ENCODE measurements at regions of chr1 and their contacts with region 1.

Region 1: GRCh38 chr1:31548907-31549808 is 27.2 kb upstream of the TINAGL1 start:
- DNase-seq: peak; percentile 93
- ATAC-seq: peak; percentile 95
- H3K4me3 Mint-ChIP-seq: peak overlapping the region; percentile 63
- H3K27ac Mint-ChIP-seq: no peak overlapping the region
- H3K4me1 Mint-ChIP-seq: peaks cover 11% of the 10 kb centered on the region
- H3K27me3 Mint-ChIP-seq: peaks cover 7% of the 10 kb centered on the region

Region 2: GRCh38 chr1:31182352-31182751 is 366.8 kb before region 1 on chr1:
- CTCF ChIA-PET with region 1: interaction called, 12 read pairs
- POLR2A ChIA-PET with region 1: no interaction called
- DNase-seq: peak; percentile 68
- ATAC-seq: peak; percentile 64
- H3K4me3 Mint-ChIP-seq: no peak overlapping the region
- H3K27ac Mint-ChIP-seq: no peak overlapping the region
- H3K4me1 Mint-ChIP-seq: peaks cover 9% of the 10 kb centered on the region
- H3K27me3 Mint-ChIP-seq: peaks cover 18% of the 10 kb centered on the region

Region 3: DNA sequence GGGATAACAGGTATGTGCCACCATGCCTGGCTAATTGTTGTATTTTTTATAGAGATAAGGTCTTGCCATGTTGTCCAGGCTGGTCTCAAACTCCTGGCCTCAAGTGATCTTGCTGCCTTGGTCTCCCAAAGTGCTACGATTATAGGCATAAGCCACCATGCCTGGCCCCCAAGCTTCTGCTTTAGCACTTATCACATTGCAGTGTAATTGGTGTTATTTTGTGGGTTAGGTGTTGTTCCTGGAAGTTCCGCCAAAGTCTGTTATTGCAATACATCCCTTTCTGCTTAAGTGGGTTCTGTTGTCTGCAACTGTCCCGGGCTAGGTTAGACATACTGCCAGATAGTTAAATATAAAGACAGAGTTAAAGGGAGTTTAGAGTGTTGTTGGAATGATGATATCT is 249.0 kb before region 1 on chr1:
- CTCF ChIA-PET with region 1: no interaction called
- POLR2A ChIA-PET with region 1: no interaction called
- DNase-seq: no peak
- ATAC-seq: no peak
- H3K4me3 Mint-ChIP-seq: no peak overlapping the region
- H3K27ac Mint-ChIP-seq: no peak overlapping the region
- H3K4me1 Mint-ChIP-seq: peaks cover 23% of the 10 kb centered on the region
- H3K27me3 Mint-ChIP-seq: no peaks in the 10 kb centered on the region

Region 4: DNA sequence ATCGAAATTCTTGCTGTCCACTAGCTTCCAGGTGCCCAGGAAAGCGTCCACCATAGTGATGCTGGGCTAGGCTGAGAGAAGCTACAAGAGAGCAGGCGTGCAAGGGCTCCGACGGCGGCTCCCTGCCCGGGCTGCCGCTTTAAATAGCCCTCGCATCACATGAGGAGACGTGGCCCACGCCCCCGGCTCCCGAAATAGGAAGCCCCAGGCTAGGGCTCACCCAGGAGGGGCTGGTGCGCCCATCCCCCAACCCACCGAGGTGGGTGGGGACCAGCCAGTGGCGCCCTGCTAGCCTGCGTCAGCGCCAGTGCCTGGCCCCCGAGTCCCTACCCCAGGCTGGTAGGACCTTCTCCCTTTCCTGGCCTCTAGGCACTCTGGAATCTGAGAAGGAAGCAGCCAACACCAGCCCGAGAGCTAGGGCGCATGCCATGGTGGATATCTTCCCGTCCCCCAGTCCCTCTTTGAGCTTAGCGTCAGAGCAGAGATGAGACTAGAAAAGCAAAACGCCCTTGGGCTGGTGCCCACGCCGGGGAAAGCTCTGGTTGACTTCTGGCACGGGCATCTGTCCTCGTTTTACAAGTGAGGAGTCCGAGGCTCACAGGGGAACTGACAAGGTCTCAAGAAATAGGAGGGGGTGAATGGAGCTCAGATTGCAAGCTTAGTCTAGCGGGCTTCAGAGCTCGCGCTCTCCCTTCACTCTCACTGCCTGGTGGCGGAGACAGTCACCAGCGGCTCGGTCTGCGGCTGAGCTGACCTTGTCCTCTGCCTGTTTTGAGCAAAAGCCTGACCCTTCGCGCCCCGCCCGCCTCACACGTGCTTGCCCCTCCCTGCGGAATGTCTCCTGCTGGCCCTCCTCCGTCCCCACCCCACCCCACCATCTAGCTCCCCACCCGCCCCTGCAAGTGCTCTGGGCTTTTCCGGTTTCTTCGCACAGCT is 175.9 kb before region 1 on chr1 and contains the start of gene FABP3:
- CTCF ChIA-PET with region 1: interaction called, 11 read pairs
- POLR2A ChIA-PET with region 1: no interaction called
- DNase-seq: peak; percentile 46
- ATAC-seq: peak; percentile 74
- H3K4me3 Mint-ChIP-seq: peak within 1 kb of the TSS; percentile 67
- H3K27ac Mint-ChIP-seq: peak within 1 kb of the TSS; percentile 13
- H3K4me1 Mint-ChIP-seq: peaks cover 20% of the 10 kb centered on the region
- H3K27me3 Mint-ChIP-seq: peaks cover 4% of the 10 kb centered on the region
- total RNA-seq, gene FABP3: not detected

Region 5: DNA sequence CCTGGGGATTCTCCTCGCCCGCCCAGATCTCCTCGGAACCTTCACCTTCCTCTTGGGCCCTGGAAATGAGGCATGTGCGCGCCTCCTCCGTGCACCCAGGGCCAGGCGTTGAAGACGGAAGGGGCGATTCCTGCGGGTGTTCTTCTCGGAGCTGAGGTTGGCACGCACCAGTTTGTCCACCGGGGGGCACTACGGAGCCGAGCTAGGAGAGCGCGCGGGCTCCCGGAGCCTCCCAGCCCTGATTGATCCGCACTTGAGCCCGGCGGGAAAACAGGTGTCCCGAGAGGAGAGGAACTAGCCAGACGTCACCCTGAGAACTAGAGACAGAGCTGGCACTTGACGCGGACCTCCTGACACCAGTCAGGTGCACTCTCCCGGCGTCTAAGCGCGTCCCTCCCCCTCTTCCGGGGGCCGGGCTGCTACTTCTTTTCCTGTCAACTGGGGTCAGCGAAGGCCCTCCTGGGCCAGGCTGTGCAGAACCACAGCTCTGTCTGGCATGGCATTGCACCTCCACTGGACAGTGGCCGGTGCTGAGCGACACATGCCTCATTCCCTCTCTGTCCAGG is 154.4 kb before region 1 on chr1:
- CTCF ChIA-PET with region 1: interaction called, 62 read pairs
- POLR2A ChIA-PET with region 1: no interaction called
- DNase-seq: peak; percentile 85
- ATAC-seq: peak; percentile 97
- H3K4me3 Mint-ChIP-seq: peak overlapping the region; percentile 79
- H3K27ac Mint-ChIP-seq: peak overlapping the region; percentile 70
- H3K4me1 Mint-ChIP-seq: peaks cover 16% of the 10 kb centered on the region
- H3K27me3 Mint-ChIP-seq: peaks cover 7% of the 10 kb centered on the region

Region 6: DNA sequence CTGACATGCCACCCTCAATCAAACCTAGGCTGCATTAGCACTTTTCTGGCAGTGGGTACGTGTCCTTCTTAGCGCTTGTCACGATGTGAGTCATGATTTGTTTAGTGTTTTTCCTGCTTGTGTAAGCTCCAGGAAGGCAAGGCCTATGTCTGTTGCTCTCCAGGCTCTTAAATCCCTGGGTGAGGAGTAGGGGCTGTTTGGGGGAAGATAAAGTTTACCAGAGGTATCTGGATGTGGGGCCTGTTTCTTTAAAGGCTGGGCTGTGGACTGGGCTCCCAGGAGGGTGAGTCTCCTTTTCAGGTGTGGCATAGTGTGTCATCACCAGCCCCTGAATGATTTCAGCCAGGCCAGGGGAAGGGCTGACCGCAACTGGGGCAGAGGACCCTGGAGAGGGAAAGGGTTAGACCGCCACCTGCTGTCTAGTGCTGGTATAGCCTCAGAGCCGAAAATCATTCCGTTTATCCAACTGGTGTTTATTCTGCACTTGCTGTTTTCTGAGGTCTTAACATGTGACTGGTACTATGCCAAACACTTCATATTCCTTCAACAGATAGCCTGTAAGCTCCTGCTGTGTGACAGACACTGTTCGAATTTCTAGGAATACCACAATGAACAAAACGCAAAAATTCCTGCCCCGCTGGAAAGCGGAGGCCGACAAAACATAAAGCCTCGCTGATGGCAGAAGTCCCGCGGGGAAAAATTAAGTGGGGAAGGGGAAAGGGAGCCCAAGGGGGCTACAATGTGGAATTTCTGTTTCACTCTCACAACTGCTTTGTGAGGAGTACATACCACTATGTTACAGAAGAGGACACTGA is 126.4 kb before region 1 on chr1:
- CTCF ChIA-PET with region 1: interaction called, 23 read pairs
- POLR2A ChIA-PET with region 1: no interaction called
- DNase-seq: peak; percentile 76
- ATAC-seq: peak; percentile 54
- H3K4me3 Mint-ChIP-seq: no peak overlapping the region
- H3K27ac Mint-ChIP-seq: no peak overlapping the region
- H3K4me1 Mint-ChIP-seq: peaks cover 18% of the 10 kb centered on the region
- H3K27me3 Mint-ChIP-seq: peaks cover 17% of the 10 kb centered on the region

Region 7: GRCh38 chr1:31535561-31535960 is 13.6 kb before region 1 on chr1:
- CTCF ChIA-PET with region 1: interaction called, 23 read pairs
- POLR2A ChIA-PET with region 1: no interaction called
- DNase-seq: no peak
- ATAC-seq: no peak
- H3K4me3 Mint-ChIP-seq: no peak overlapping the region
- H3K27ac Mint-ChIP-seq: no peak overlapping the region
- H3K4me1 Mint-ChIP-seq: peaks cover 14% of the 10 kb centered on the region
- H3K27me3 Mint-ChIP-seq: peaks cover 35% of the 10 kb centered on the region

Region 8: GRCh38 chr1:31564134-31564989 is 15.2 kb after region 1 on chr1:
- CTCF ChIA-PET with region 1: interaction called, 12 read pairs
- POLR2A ChIA-PET with region 1: no interaction called
- DNase-seq: peak; percentile 63
- ATAC-seq: peak; percentile 68
- H3K4me3 Mint-ChIP-seq: no peak overlapping the region
- H3K27ac Mint-ChIP-seq: no peak overlapping the region
- H3K4me1 Mint-ChIP-seq: no peaks in the 10 kb centered on the region
- H3K27me3 Mint-ChIP-seq: peaks cover 19% of the 10 kb centered on the region

Measured in activated CD8-positive, alpha-beta T cell treated with anti-CD3 and anti-CD28 coated beads, Interleukin-2, amount 10 ng/mL, durations not matched to agents 7 days and 5 days (primary cell).